ENCODE measurements at regions of chr7 and their contacts with region 1.

Region 1: DNA sequence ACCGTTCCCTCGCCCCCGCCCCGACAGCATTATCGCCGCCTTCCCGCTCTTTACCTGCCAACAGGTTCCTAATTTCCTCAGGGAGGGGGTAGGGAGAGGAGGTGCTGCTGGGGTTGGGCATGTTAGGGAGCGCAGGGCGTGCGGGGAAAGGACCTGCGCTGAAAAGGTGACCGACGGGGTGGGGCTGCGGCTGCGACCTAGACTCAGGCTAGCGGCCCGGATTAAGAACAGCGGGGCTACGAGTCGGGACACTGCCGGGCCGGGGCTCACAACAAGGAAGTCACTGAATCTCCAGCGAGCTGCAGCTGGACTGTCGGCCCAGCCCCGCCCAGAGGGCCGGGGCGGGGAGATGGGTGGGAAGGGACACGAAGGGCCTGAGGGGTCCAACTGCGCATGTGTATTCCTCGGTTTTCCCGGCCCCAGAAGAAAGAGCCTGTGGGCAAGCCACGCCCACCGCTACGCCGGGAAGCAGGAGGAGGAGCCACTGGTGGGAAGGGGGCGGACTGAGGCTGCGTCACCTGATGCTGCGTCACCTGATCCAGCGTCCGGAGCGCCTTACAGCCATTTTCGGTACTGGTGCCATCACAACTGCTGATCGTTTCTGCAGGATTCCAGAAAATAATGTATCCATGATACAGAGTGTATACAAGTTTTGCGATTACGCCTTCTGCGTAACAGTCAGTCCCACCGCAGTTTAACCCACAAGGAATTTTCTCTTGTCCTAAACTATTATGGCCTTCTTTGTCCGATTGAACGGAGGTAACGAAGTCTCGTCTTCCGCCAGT is at the start of gene SKAP2:
- DNase-seq: peak; percentile 91 to 94
- ATAC-seq: peak; percentile 89 to 97 (median 95)
- H3K4me3 ChIP-seq: peak within 1 kb of the TSS; percentile 80
- H3K4me3 Mint-ChIP-seq: peak within 1 kb of the TSS; percentile 96
- H3K27ac ChIP-seq: peak within 1 kb of the TSS; percentile 95
- H3K27ac Mint-ChIP-seq: peak within 1 kb of the TSS; percentile 93 to 100
- H3K4me1 ChIP-seq: peaks cover 3% of the 10 kb centered on the region
- H3K4me1 Mint-ChIP-seq: peaks cover 12 to 21% of the 10 kb centered on the region in 2 donors
- H3K27me3 ChIP-seq: peaks cover 2% of the 10 kb centered on the region
- H3K27me3 Mint-ChIP-seq: peaks cover 1 to 9% of the 10 kb centered on the region in 2 donors
- CTCF ChIP-seq: no peak
- total RNA-seq, gene SKAP2: 26.8 to 42.4 (median 35.1) TPM

Region 2: DNA sequence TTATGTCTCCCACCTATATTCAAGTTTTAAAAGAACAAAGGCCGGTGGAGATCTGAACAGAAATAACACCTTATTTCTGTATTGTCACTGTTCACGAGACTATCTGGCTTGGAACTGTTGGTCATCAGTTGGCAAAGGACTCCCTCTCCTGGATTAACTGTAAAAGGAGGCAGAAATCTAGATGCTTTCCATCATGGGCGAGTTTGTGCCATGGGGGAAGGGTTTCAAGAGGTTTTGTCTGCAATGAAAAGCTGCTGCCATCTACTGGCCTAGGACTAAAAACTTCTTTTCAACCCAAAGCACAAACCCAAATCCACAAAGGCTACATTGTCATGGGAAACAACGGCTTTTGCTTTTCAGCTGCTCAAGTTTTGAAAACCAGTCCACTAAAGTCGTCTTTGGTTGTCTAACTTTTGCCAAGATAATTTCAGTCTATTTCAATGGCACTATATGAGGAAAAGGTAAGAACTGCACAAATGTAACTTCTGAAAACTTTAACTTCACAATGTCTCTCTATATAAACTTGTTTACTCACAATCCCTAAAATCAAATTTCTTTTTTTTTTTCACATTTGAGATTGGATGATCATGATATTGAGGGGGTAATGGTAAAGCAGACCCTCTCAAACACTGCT is 196.9 kb before region 1 on chr7:
- intact Hi-C with region 1: no loop called
- DNase-seq: peak in 1 of 2 donors; percentile 82
- ATAC-seq: peak; percentile 50 to 65 (median 59)
- H3K4me3 ChIP-seq: no peak overlapping the region
- H3K4me3 Mint-ChIP-seq: no peak overlapping the region
- H3K27ac ChIP-seq: no peak overlapping the region
- H3K27ac Mint-ChIP-seq: no peak overlapping the region
- H3K4me1 ChIP-seq: no peaks in the 10 kb centered on the region
- H3K4me1 Mint-ChIP-seq: peaks cover 16 to 18% of the 10 kb centered on the region in 2 donors
- H3K27me3 ChIP-seq: no peaks in the 10 kb centered on the region
- H3K27me3 Mint-ChIP-seq: no peaks in the 10 kb centered on the region
- CTCF ChIP-seq: peak; percentile 46

Region 3: GRCh38 chr7:26681819-26682418 is 182.6 kb before region 1 on chr7:
- intact Hi-C with region 1: no loop called
- DNase-seq: peak in 1 of 2 donors; percentile 62
- ATAC-seq: peak; percentile 62 to 74 (median 71)
- H3K4me3 ChIP-seq: no peak overlapping the region
- H3K4me3 Mint-ChIP-seq: no peak overlapping the region
- H3K27ac ChIP-seq: no peak overlapping the region
- H3K27ac Mint-ChIP-seq: no peak overlapping the region
- H3K4me1 ChIP-seq: no peaks in the 10 kb centered on the region
- H3K4me1 Mint-ChIP-seq: peaks cover 0 to under 1% of the 10 kb centered on the region in 2 donors
- H3K27me3 ChIP-seq: no peaks in the 10 kb centered on the region
- H3K27me3 Mint-ChIP-seq: no peaks in the 10 kb centered on the region
- CTCF ChIP-seq: peak; percentile 92

Region 4: DNA sequence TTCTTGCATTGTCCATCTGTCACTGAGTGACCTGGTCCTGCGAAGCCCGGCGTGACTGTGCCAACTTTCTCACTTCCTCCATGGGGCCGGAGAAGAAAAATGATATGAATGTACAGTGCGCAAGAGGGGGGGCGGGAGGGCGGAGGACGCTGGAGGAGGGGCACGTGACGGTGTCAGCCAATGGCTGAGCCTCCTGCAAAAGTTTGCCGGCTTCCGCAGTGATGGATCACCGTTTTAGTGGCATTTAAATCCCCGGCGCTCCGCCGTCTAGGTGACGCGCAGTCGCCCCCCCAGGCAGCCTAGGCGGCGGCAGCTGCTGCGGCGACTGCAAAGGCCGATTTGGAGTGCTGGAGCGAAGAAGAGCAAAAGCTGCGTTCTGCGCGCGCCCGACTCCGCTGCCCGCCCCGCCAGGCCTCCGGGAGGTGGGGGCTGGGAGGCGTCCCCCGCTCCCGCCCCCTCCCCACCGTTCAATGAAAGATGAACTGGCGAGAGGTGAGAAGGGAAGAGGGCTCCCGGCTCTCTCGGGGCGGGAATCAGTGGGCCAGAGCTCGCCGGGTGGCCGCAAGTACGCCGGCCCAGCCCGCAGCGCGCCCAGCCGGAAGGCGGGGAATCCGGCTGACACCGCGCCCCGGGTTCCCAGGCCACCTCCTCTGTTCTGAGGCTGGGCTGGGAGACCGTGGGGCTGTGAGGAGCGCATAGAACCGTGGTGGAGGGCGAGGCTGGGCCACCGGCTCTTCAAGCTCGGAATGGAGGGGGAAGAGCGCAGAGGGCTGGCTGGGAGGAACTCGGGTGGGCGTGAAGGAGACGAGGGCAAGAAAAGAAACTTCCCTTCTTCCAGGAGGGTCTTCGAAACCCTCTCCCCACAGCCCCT is 231.6 kb after region 1 on chr7 and contains the start of gene HOXA1:
- intact Hi-C with region 1: loop called (anchors 2 kb)
- DNase-seq: peak; percentile 74 to 87
- ATAC-seq: peak; percentile 84 to 92 (median 91)
- H3K4me3 ChIP-seq: peak within 1 kb of the TSS; percentile 86
- H3K4me3 Mint-ChIP-seq: peak within 1 kb of the TSS; percentile 91
- H3K27ac ChIP-seq: peak within 1 kb of the TSS; percentile 71
- H3K27ac Mint-ChIP-seq: peak within 1 kb of the TSS; percentile 71 to 88
- H3K4me1 ChIP-seq: peaks cover 30% of the 10 kb centered on the region
- H3K4me1 Mint-ChIP-seq: peaks cover 47 to 52% of the 10 kb centered on the region in 2 donors
- H3K27me3 ChIP-seq: peaks cover 11% of the 10 kb centered on the region
- H3K27me3 Mint-ChIP-seq: peaks cover 41 to 63% of the 10 kb centered on the region in 2 donors
- CTCF ChIP-seq: no peak
- total RNA-seq, gene HOXA1: 0.64 to 1.3 (median 1.1) TPM

Measured in natural killer cell (primary cell).